Astrocyte of the cerebellum (primary cell): ENCODE measurements at regions of chr10 and their contacts with region 1.

Region 1: GRCh38 chr10:36624551-36625100 is 500.8 kb upstream of the ANKRD30A start:
- DNase-seq: no peak
- H3K4me3 ChIP-seq: no peak overlapping the region
- CTCF ChIP-seq: no peak

Region 2: GRCh38 chr10:36202881-36203280 is 421.7 kb before region 1 on chr10:
- in situ Hi-C with region 1: no loop called
- DNase-seq: no peak
- H3K4me3 ChIP-seq: no peak overlapping the region
- CTCF ChIP-seq: no peak

Region 3: DNA sequence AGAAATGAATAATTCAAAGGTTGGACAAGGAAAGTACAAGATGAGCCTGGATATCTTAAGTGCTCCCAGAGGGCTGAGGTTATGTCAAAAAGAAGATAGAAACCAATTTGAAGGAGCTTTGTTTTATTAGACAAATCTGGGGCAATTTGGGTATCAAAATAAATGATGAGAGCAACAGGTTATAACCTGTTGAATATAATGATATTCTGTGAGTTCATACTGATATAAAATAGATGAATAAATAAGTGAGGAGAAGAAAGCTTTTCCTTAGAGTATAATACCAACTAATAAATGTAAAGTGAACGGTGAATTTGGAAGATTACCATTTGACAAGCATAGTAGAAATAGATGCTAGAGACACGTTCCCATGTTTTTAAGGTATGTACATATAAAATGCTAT is 43.4 kb before region 1 on chr10:
- in situ Hi-C with region 1: loop called (anchors 5 kb)
- DNase-seq: no peak
- H3K4me3 ChIP-seq: no peak overlapping the region
- CTCF ChIP-seq: no peak

Region 4: GRCh38 chr10:36721871-36722270 is 97.2 kb after region 1 on chr10:
- in situ Hi-C with region 1: no loop called
- DNase-seq: no peak
- H3K4me3 ChIP-seq: no peak overlapping the region
- CTCF ChIP-seq: no peak